ENCODE measurements at regions of chr6 and their contacts with region 1.

Region 1: GRCh38 chr6:2988426-2989331 is 11.0 kb upstream of the NQO2 start:
- DNase-seq: peak; percentile 72
- H3K27ac ChIP-seq: peak overlapping the region; percentile 100
- CTCF ChIP-seq: peak; percentile 89

Region 2: DNA sequence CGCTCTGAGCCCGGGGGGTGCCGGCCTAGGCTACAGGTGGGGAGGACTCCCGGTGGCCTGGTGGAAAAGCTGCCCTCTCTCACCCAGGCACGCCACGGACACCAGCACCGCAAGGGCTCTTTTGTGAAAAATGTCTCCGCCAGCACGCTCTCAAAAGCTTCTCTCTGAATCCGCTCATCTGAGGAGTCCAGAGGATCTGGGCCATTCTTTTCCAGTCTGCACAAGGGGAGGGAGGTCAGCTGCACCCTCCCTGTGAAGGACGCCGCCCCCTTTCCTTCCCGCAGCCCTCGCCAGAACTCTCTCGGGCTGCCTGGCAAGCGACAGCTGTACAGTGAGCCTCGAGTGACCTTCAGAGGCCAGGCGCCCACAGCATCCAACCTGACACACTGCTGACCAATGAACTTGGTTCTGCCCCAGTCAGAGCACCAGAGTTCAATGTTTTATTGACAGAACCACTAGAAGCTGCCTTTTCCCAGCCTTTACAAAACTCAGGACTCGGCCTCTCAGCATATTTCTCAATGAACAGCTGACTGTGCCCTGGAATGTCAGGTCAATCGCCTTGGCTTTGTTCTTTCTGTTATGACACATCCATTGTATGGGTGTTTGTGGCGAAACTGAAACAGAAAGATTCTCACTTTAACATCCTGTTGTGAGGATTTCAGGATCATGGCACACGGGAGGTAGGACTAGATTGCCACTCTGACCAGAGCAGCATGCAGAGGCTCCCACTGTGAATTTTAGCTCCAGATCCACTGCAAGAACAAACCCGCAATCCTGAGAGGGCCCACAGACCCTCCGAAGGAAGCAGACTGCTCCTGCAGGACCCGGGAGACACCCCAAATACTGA is 112.2 kb before region 1 on chr6:
- CTCF ChIA-PET with region 1: no interaction called
- POLR2A ChIA-PET with region 1: no interaction called
- DNase-seq: peak; percentile 91
- H3K27ac ChIP-seq: peak overlapping the region; percentile 85
- CTCF ChIP-seq: no peak

Region 3: DNA sequence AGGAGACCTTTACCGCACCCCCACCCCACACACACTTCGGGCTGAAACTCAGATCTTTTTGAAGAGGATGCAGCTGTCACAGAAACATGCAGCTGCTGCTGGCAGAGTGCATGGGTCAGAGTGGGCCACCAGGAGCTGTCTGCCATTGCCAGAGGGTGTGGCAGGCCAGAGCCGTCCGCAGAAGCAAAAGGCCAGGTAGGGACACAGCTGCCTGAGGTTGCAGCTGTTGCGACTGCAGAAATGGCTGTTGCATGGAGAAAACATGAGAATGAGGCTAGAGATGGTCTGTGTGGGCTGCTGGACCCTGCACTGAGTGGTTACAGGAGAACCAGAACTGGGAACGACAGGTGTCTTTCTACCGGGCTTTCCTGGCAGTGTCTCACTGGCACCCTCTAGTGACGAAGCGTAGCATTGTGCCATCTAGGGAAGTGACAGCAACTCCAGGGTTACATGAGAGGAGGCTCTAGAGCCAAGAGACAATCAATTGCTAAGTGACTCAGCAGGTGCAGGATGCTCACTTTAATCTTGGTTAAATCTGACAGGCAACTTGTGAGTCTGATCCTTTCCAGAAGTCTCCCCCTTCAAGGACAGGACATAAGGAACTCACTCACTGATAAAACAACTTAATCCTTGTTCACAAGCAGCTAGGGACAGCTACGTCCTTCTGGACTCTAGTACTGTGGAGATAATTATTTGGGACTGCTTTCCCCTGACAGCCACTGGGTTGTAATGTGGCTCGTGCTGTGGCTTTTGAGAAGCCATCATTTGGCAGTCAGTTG is 56.5 kb before region 1 on chr6:
- CTCF ChIA-PET with region 1: no interaction called
- POLR2A ChIA-PET with region 1: interaction called, 10 read pairs
- DNase-seq: peak; percentile 85
- H3K27ac ChIP-seq: no peak overlapping the region
- CTCF ChIP-seq: peak; percentile 98

Region 4: DNA sequence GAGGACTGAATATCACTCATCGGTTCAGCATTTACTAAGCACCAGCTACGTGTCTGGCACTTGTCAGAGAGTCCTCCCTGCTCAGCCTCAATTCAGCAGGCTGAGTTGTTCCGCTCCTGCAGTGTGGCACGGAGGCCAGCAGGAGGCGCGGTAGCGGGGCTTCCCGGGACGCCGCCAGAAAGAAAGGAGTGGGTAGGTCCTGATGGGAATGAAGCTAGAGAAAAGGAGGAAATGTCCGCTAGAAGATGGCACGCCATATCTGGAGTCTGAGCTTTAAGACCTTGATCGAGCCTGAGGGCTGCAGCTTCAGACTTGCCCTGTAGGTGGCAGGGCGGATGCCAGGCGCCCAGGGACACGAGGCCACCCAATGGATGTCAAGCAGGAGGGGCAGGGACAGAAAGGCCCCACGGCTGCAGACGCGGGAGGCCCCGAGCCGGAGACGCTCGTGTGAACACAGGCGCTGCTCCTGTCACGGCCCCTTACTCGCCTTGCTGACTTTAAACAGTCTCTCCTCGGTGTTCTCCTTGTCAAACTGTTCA is 36.1 kb before region 1 on chr6:
- CTCF ChIA-PET with region 1: interaction called, 15 read pairs
- POLR2A ChIA-PET with region 1: no interaction called
- DNase-seq: peak; percentile 44
- H3K27ac ChIP-seq: peak overlapping the region; percentile 34
- CTCF ChIP-seq: peak; percentile 90